Heart right ventricle (tissue), 16 donors: ENCODE measurements at regions of chr17 and their contacts with region 1.

Region 1: GRCh38 chr17:879549-880442 is 97.6 kb downstream of the MRM3 start:
- DNase-seq: peak; percentile 83 to 86
- ATAC-seq: peak; percentile 32 to 76 (median 66)
- H3K4me3 ChIP-seq: peak overlapping the region in 2 of 10 donors; percentile 5 to 11
- H3K27ac ChIP-seq: peak overlapping the region in 9 of 10 donors; percentile 64 to 91 (median 83)
- H3K4me1 ChIP-seq: peaks cover 4 to 63% (median 48%) of the 10 kb centered on the region in 9 donors
- H3K27me3 ChIP-seq: no peaks in the 10 kb centered on the region
- CTCF ChIP-seq: peak; percentile 22 to 75 (median 64)

Region 2: GRCh38 chr17:794876-795275 is 84.9 kb before region 1 on chr17:
- intact Hi-C with region 1: loop called in 3 of 10 experiments (anchors 10 kb)
- DNase-seq: peak; percentile 88 to 89
- ATAC-seq: peak; percentile 40 to 90 (median 78)
- H3K4me3 ChIP-seq: peak overlapping the region in 9 of 10 donors; percentile 27 to 53 (median 43)
- H3K27ac ChIP-seq: peak overlapping the region in 9 of 10 donors; percentile 25 to 71 (median 55)
- H3K4me1 ChIP-seq: peaks cover 0 to 36% (median 15%) of the 10 kb centered on the region in 9 donors
- H3K27me3 ChIP-seq: no peaks in the 10 kb centered on the region
- CTCF ChIP-seq: peak; percentile 85 to 97 (median 86)

Region 3: GRCh38 chr17:846901-847843 is 32.6 kb before region 1 on chr17:
- intact Hi-C with region 1: loop called in 1 of 10 experiments (anchors 2 kb)
- DNase-seq: peak in 1 of 2 donors; percentile 29
- ATAC-seq: peak; percentile 4 to 33 (median 17)
- H3K4me3 ChIP-seq: peak overlapping the region; percentile 7 to 50 (median 41)
- H3K27ac ChIP-seq: peak overlapping the region; percentile 13 to 83 (median 73)
- H3K4me1 ChIP-seq: peaks cover 8 to 62% (median 30%) of the 10 kb centered on the region in 9 donors
- H3K27me3 ChIP-seq: peaks cover 0 to 28% (median 0%) of the 10 kb centered on the region in 7 donors
- CTCF ChIP-seq: no peak

Region 4: GRCh38 chr17:933312-934083 is 53.7 kb after region 1 on chr17:
- intact Hi-C with region 1: loop called in 1 of 10 experiments (anchors 10 kb)
- DNase-seq: no peak
- ATAC-seq: peak in 7 of 8 donors; percentile 21 to 81 (median 62)
- H3K4me3 ChIP-seq: peak overlapping the region in 2 of 10 donors; percentile 6 to 11
- H3K27ac ChIP-seq: peak overlapping the region in 6 of 10 donors; percentile 1 to 43 (median 30)
- H3K4me1 ChIP-seq: peaks cover 5 to 30% (median 15%) of the 10 kb centered on the region in 9 donors
- H3K27me3 ChIP-seq: no peaks in the 10 kb centered on the region
- CTCF ChIP-seq: no peak

Region 5: GRCh38 chr17:951325-952132 is 71.7 kb after region 1 on chr17:
- intact Hi-C with region 1: no loop called
- DNase-seq: no peak
- ATAC-seq: peak in 7 of 8 donors; percentile 27 to 74 (median 52)
- H3K4me3 ChIP-seq: peak overlapping the region in 4 of 10 donors; percentile 5 to 29 (median 19)
- H3K27ac ChIP-seq: peak overlapping the region in 1 of 10 donors; percentile 11
- H3K4me1 ChIP-seq: peaks cover 0 to 32% (median 11%) of the 10 kb centered on the region in 9 donors
- H3K27me3 ChIP-seq: peaks cover 0 to 3% (median 0%) of the 10 kb centered on the region in 7 donors
- CTCF ChIP-seq: no peak

Region 6: GRCh38 chr17:1055751-1056645 is 176.2 kb after region 1 on chr17:
- intact Hi-C with region 1: loop called in 1 of 10 experiments (anchors 10 kb)
- DNase-seq: peak; percentile 64 to 75
- ATAC-seq: peak; percentile 61 to 83 (median 82)
- H3K4me3 ChIP-seq: no peak overlapping the region
- H3K27ac ChIP-seq: peak overlapping the region in 7 of 10 donors; percentile 4 to 61 (median 34)
- H3K4me1 ChIP-seq: peaks cover 2 to 28% (median 13%) of the 10 kb centered on the region in 9 donors
- H3K27me3 ChIP-seq: no peaks in the 10 kb centered on the region
- CTCF ChIP-seq: peak; percentile 77 to 88 (median 83)